MCF 10A (cell line): ENCODE measurements at regions of chr14 and their contacts with region 1.

Region 1: GRCh38 chr14:101889898-101890297 is 74.5 kb upstream of the DYNC1H1 start:
- DNase-seq: peak; percentile 0
- H3K4me3 Mint-ChIP-seq: no peak overlapping the region
- H3K27ac Mint-ChIP-seq: no peak overlapping the region
- H3K4me1 Mint-ChIP-seq: no peaks in the 10 kb centered on the region
- H3K27me3 Mint-ChIP-seq: no peaks in the 10 kb centered on the region
- CTCF ChIP-seq: peak; percentile 5

Region 2: DNA sequence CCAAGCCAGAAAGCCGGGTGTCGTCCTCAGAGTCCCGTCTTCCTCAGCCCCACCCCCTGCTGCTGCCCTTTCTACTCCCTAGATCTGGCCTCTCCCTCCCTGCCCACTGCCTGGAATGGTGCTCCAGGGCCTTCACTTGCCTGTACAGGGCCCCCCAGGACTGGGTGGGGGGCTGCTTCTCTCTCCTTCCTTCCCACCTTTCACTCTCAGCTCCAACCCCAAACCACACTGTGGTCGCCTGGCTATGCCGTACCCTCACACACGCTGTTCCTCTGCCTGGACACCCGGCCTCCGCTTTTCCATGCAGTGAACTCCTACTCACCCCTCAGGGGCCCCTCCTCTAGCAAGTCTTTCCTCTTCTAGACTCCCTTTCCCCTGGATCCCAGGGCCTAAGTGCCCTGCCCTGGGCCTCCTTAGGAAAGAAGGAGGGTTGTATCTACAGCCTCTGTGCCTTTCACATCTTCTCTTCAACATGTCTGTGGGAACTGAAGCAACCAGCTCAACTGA is 354.1 kb before region 1 on chr14:
- CTCF ChIA-PET with region 1: no interaction called
- POLR2A ChIA-PET with region 1: no interaction called
- intact Hi-C with region 1: no loop called
- DNase-seq: no peak
- H3K4me3 Mint-ChIP-seq: no peak overlapping the region
- H3K27ac Mint-ChIP-seq: no peak overlapping the region
- H3K4me1 Mint-ChIP-seq: no peaks in the 10 kb centered on the region
- H3K27me3 Mint-ChIP-seq: peaks cover 42% of the 10 kb centered on the region
- CTCF ChIP-seq: no peak

Region 3: DNA sequence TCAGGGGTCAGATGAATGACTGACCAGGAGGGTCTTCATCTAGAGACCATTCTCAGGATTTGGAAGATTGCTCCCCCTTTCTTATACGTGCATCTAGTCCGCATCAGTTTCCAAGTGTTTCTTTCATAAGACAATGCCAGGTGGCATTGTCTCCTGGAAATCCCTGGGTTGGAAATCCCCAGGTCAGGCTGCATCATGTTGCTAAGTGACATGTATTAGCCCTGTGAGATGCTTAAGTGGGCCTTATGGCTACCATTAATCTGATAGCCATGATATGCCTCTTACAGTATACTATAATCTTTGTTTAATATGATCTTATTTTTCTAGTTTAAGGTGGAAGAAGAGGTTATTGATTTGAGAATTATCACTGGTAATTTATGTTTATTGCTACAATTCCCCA is 235.8 kb before region 1 on chr14:
- CTCF ChIA-PET with region 1: no interaction called
- POLR2A ChIA-PET with region 1: no interaction called
- intact Hi-C with region 1: no loop called
- DNase-seq: no peak
- H3K4me3 Mint-ChIP-seq: no peak overlapping the region
- H3K27ac Mint-ChIP-seq: no peak overlapping the region
- H3K4me1 Mint-ChIP-seq: no peaks in the 10 kb centered on the region
- H3K27me3 Mint-ChIP-seq: peaks cover 100% of the 10 kb centered on the region
- CTCF ChIP-seq: no peak

Region 4: DNA sequence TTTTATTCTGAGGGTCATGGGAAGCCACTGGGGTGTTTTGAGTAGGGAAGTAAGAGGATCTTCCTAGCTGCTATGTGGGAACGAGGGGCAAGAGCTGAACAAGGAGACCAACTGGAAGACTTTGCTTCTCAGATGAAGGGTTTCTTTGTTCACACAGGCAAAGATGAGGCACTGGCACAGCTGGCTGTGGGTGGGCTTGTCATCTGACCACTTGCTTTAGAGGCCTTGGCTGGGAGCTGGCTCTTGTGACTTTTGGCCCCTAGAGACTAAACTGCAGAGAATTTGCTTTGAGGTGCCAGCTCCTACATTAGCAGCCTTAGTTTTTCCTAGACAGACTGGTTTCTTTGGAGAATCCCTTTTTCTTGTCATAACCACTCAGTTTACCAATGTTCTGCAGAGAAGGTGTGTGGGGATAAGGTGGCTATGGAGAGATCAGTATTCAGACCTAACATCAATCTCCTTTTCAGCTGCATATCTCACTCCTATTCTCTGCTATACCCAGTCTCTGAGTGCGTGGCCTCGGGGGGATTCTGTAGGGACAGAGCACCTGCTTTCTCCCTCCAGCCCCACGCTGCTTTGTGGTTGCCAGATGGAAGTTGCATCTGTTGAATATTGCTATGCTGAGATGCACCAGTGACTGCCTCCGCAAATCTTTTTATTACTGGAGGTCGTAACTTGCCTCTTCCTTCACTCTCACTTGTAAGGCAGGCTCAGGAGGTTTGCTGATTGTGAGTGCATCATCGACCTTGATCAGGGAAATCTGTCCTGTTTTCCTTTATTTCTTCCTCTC is 115.7 kb before region 1 on chr14:
- CTCF ChIA-PET with region 1: interaction called, 5 read pairs
- POLR2A ChIA-PET with region 1: no interaction called
- intact Hi-C with region 1: loop called (anchors 10 kb)
- DNase-seq: no peak
- H3K4me3 Mint-ChIP-seq: no peak overlapping the region
- H3K27ac Mint-ChIP-seq: no peak overlapping the region
- H3K4me1 Mint-ChIP-seq: peaks cover 14% of the 10 kb centered on the region
- H3K27me3 Mint-ChIP-seq: no peaks in the 10 kb centered on the region
- CTCF ChIP-seq: no peak